GM10248 (cell line): ENCODE measurements at regions of chr1 and their contacts with region 1.

Region 1: GRCh38 chr1:63557365-63557987 is 34.2 kb downstream of the EFCAB7 start:
- DNase-seq: peak; percentile 20
- CTCF ChIP-seq: peak; percentile 48

Region 2: GRCh38 chr1:63435161-63435560 is 122.3 kb before region 1 on chr1:
- CTCF ChIA-PET with region 1: no interaction called
- POLR2A ChIA-PET with region 1: no interaction called
- DNase-seq: no peak
- CTCF ChIP-seq: no peak

Region 3: GRCh38 chr1:63569068-63569467 is 11.6 kb after region 1 on chr1:
- CTCF ChIA-PET with region 1: interaction called, 22 read pairs
- POLR2A ChIA-PET with region 1: no interaction called
- DNase-seq: no peak
- CTCF ChIP-seq: no peak

Region 4: DNA sequence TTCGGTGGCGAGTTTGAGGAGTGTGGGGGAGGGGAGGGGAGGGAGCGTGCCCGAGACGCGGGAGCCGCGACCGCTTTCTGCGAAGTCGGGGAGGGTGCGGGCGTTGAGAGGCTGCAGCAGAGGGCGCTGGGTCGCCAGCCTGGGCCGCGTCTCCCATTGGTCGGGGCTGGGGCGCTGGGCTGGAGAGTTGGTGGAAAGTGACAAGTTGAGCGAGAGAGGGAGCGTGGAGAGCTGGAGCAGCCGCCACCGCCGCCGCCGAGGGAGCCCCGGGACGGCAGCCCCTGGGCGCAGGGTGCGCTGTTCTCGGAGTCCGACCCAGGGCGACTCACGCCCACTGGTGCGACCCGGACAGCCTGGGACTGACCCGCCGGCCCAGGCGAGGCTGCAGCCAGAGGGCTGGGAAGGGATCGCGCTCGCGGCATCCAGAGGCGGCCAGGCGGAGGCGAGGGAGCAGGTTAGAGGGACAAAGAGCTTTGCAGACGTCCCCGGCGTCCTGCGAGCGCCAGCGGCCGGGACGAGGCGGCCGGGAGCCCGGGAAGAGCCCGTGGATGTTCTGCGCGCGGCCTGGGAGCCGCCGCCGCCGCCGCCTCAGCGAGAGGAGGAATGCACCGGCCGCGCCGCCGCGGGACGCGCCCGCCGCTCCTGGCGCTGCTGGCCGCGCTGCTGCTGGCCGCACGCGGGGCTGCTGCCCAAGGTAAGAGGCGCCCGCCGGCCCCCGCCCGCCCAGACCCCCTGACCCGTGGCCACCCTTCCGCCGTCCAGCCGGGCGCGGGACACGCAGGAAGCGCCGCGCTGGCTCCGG is 216.5 kb after region 1 on chr1 and contains the start of gene ROR1:
- CTCF ChIA-PET with region 1: no interaction called
- POLR2A ChIA-PET with region 1: no interaction called
- DNase-seq: peak; percentile 77
- CTCF ChIP-seq: peak; percentile 52